Left colon (tissue), 2 donors: ENCODE measurements at regions of chr10 and their contacts with region 1.

Region 1: DNA sequence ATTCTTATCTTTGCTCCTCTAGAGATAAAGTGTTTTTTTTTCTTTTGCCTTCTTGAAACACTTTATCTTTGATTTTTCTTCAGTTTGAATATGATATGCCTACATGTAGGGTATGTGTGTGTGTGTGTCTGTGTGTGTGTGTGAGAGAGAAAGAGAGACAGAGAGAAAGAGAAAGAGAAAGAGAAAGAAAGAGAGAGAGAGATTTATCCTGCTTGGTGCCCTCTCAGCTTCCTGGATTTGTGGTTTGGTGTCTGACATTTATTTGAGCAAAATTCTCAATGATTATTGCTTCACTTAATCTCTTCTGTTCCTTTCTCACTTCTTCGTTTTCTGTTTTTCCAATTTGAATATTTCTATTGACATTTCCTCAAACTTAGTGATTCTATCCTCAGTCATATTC is 60.3 kb downstream of the RAB18 start:
- DNase-seq: no peak
- ATAC-seq: no peak

Region 2: DNA sequence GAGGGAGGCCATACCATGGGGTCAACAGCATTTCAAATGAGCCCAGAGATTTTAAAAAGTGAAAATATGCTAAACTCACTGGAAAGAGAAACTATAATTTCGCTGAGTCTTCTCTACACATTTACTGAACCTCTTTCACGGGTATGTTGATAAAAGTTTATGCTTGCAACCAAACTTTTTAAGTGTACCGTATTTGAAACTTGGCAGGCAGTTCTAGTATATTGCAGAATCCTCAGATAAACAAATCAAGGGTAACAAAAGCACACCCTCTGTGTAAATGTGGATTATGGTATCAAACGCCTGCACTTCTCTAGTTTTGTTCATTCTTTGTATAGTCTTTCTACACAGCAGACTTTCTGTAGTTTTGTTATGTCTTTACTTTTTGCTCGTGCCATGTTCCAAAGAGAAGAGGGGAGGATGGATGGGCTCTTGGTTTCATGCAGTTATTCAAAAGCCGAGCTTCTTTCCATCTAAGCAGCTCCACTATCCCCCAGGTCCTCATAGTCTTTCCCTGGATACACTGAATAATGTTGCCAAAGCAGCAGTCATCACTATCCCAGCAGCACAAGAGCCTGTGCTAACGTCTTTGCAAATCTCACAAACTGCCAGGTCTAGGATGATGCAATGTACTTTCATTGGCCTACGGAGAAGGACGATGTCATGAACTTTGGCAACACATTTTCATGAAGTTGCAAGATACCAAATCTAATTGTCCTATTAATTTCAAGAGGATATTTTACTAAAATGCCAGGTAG is 607.2 kb after region 1 on chr10:
- intact Hi-C with region 1: loop called in 1 of 2 experiments (anchors 5 kb)
- DNase-seq: peak in 1 of 2 donors; percentile 24
- ATAC-seq: no peak